Vagina (tissue), 2 donors: ENCODE measurements at regions of chr17 and their contacts with region 1.

Region 1: GRCh38 chr17:68035523-68036303 is at the start of gene KPNA2:
- DNase-seq: peak; percentile 97
- H3K4me3 ChIP-seq: peak within 1 kb of the TSS; percentile 96
- H3K27ac ChIP-seq: peak within 1 kb of the TSS; percentile 85
- H3K4me1 ChIP-seq: peaks cover 9% of the 10 kb centered on the region
- H3K27me3 ChIP-seq: no peaks in the 10 kb centered on the region
- CTCF ChIP-seq: no peak
- POLR2A ChIP-seq: peak in 1 of 2 donors; percentile 58
- total RNA-seq, gene KPNA2: 29.7 TPM

Region 2: GRCh38 chr17:67663460-67663859 is 372.3 kb before region 1 on chr17:
- intact Hi-C with region 1: no loop called
- DNase-seq: no peak
- H3K4me3 ChIP-seq: no peak overlapping the region
- H3K27ac ChIP-seq: no peak overlapping the region
- H3K4me1 ChIP-seq: no peaks in the 10 kb centered on the region
- H3K27me3 ChIP-seq: no peaks in the 10 kb centered on the region
- CTCF ChIP-seq: no peak
- POLR2A ChIP-seq: no peak

Region 3: GRCh38 chr17:67980456-67980855 is 55.3 kb before region 1 on chr17:
- intact Hi-C with region 1: no loop called
- DNase-seq: no peak
- H3K4me3 ChIP-seq: no peak overlapping the region
- H3K27ac ChIP-seq: peak overlapping the region; percentile 76
- H3K4me1 ChIP-seq: peaks cover 24% of the 10 kb centered on the region
- H3K27me3 ChIP-seq: no peaks in the 10 kb centered on the region
- CTCF ChIP-seq: no peak
- POLR2A ChIP-seq: no peak

Region 4: DNA sequence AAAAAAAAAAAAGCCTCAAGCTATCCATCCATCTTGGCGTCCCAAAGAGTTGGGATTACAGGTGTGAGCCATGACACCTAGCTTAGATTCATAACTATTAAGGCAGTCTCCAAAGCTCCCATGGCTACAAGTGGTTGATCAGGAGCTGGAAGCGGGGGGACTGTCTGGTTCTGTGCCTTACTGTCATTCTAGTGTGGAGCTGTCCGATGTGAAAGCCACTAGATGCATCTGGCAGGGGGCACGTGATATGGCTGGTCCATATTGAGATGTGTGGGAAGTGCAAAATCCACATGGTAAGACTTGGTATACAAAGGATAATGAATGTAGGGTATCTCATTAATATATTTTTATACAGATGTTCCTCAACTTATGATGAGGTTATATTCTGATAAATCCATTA is 38.6 kb after region 1 on chr17:
- intact Hi-C with region 1: loop called (anchors 2 kb)
- DNase-seq: no peak
- H3K4me3 ChIP-seq: no peak overlapping the region
- H3K27ac ChIP-seq: no peak overlapping the region
- H3K4me1 ChIP-seq: peaks cover 5% of the 10 kb centered on the region
- H3K27me3 ChIP-seq: no peaks in the 10 kb centered on the region
- CTCF ChIP-seq: no peak
- POLR2A ChIP-seq: no peak